ENCODE measurements at regions of chr17 and their contacts with region 1.

Region 1: DNA sequence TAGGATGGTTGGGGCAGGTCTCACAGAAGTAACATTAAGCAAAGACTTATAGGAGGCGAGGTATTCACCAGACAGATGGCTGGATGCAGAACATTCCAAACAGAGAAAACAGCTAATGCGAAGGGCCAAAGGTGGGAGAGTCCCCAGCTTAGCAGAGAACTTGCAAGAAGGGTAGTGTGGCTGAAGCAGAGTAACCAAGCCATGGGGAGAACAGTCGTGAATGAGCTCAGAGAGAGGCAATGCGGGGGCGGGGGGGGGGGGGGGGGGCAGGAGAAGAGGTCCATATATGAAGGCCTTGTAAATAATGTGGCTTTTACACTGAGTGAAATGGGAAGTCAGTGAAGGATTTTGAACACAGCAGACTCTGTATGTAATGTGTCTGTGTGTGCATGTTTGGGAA is 81.3 kb downstream of the SMG6 start:
- DNase-seq: no peak
- H3K4me3 ChIP-seq: no peak overlapping the region
- H3K27ac ChIP-seq: no peak overlapping the region
- H3K4me1 ChIP-seq: peaks cover 20% of the 10 kb centered on the region
- H3K27me3 ChIP-seq: no peaks in the 10 kb centered on the region
- CTCF ChIP-seq: no peak

Region 2: DNA sequence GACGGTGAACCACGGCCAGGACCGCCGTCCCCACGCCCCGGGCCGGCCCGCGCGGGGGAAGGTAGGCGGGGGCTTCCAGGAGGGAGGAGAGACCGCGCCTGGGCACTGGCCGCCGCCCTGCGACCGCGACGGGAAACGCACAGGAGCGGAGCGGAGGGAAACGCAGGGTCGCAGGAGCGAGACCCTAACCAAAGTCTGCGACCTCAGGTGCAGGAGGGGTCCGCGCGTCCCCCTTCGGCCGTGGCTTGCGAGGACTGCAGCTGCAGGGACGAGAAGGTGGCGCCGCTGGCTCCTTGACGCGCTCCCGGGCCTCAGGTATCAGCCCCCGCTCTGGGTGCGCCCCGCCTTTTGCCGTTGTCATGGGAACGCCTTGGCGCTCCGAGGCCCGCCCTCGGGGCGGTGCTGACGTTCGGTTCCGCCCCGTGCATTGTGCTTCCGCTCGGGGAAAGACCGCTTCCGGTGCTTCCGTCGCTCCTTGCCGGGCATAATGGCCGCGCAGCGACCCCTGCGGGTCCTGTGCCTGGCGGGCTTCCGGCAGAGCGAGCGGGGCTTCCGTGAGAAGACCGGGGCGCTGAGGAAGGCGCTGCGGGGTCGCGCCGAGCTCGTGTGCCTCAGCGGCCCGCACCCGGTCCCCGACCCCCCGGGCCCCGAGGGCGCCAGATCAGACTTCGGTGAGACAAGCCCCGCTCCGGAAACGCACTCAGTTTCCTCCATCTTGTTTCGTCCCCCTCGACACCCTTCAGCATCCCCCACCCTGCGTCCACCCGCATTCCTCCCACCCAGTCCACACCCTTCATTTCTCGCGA is 180.5 kb before region 1 on chr17 and contains the start of gene OVCA2:
- CTCF ChIA-PET with region 1: no interaction called
- dilution Hi-C with region 1: no loop called
- in situ Hi-C with region 1: no loop called
- intact Hi-C with region 1: no loop called
- DNase-seq: peak; percentile 92
- H3K4me3 ChIP-seq: peak within 1 kb of the TSS; percentile 68 to 85 (median 74)
- H3K27ac ChIP-seq: peak within 1 kb of the TSS; percentile 87
- H3K4me1 ChIP-seq: peaks cover 31% of the 10 kb centered on the region
- H3K27me3 ChIP-seq: no peaks in the 10 kb centered on the region
- CTCF ChIP-seq: peak; percentile 12 to 51
- total RNA-seq, gene OVCA2: 44.1 to 65.7 TPM

Region 3: DNA sequence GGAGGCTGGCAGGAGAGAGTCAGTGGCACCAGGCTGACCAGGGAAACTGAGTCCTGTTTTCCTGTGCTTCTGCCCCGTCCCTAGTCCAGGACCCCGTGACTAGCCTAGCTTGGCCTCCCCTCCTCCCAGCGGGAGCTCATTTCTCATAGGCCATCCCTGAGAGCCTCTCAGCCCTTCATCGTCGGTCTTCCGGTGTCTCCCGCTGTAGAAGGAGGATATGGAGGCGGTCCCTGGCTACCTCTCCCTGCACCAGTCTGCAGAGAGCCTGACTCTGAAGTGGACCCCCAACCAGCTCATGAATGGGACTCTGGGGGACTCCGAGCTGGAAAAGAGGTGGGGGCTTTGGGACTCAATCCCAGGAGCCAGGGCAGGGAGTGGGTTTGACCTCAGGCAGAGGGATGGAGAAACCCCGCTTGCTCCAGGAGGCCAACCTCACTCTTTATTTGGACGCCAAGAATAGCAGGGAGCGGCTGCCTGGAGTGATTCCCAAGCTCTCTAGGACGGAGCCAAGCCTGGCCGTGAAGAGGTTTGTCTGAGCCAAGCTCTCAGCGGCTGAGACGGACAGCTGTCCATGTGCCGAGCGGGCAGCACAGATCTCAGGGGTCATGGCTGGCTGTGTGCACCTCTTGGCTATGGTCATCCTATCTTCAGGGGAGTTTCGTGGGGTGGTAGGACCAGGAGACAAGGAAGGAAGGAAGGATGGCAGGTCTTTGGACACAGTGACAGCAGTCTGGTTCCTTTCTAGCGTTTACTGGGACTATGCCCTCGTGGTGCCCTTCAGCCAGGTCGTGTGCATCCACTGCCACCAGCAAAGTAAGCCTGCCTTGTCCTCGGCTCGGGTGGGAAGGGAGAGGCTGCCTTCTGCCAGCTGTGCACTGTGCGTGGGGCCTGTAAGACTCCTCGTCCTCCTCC is 141.8 kb after region 1 on chr17:
- CTCF ChIA-PET with region 1: interaction called, 22 read pairs
- dilution Hi-C with region 1: no loop called
- in situ Hi-C with region 1: no loop called
- intact Hi-C with region 1: no loop called
- DNase-seq: no peak
- H3K4me3 ChIP-seq: no peak overlapping the region
- H3K27ac ChIP-seq: no peak overlapping the region
- H3K4me1 ChIP-seq: peaks cover 12% of the 10 kb centered on the region
- H3K27me3 ChIP-seq: no peaks in the 10 kb centered on the region
- CTCF ChIP-seq: no peak